Activated naive CD4-positive, alpha-beta T cell treated with anti-CD3 and anti-CD28 coated beads for 36 hours (primary cell): ENCODE measurements at regions of chr15 and their contacts with region 1.

Region 1: DNA sequence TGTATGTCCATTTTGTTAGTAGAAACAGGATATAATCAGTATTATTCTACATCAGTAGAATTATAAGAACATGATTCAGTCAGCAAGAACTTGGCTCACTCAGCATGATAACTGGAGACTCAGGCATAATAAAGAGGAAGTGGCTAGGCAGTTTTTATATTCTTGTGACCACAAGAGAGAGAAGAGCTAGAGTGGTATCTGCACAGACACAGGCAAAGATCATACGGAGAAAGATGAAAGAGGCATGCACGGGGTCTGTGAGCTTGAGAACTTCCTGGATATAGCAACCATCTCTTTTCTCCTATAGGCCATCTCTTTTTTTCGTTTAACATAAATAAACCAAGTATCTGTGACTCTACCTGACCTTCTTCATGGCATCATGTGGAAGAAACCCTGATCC is 46.8 kb downstream of the MYO5A start:
- DNase-seq: peak; percentile 55
- H3K4me3 Mint-ChIP-seq: no peak overlapping the region
- H3K27ac Mint-ChIP-seq: no peak overlapping the region
- H3K4me1 Mint-ChIP-seq: peaks cover 47% of the 10 kb centered on the region
- H3K27me3 Mint-ChIP-seq: no peaks in the 10 kb centered on the region

Region 2: GRCh38 chr15:52496776-52497470 is 15.0 kb after region 1 on chr15:
- CTCF ChIA-PET with region 1: interaction called, 3 read pairs
- intact Hi-C with region 1: loop called (anchors 1 kb)
- DNase-seq: peak; percentile 79
- H3K4me3 Mint-ChIP-seq: no peak overlapping the region
- H3K27ac Mint-ChIP-seq: no peak overlapping the region
- H3K4me1 Mint-ChIP-seq: peaks cover 13% of the 10 kb centered on the region
- H3K27me3 Mint-ChIP-seq: no peaks in the 10 kb centered on the region